SK-N-SH (cell line): ENCODE measurements at regions of chr2 and their contacts with region 1.

Region 1: GRCh38 chr2:25252281-25253105 is 84.1 kb upstream of the POMC start:
- DNase-seq: peak; percentile 99
- H3K4me3 ChIP-seq: peak overlapping the region in 1 of 2 experiments; percentile 52; a peak in 2 of 4 replicates
- H3K27ac ChIP-seq: peak overlapping the region in 1 of 2 experiments; percentile 96; a peak in 2 of 4 replicates
- H3K4me1 ChIP-seq: peaks cover 17 to 66% of the 10 kb centered on the region in 2 experiments
- H3K27me3 ChIP-seq: no peaks in the 10 kb centered on the region
- CTCF ChIP-seq: no peak
- EP300 ChIP-seq: peak in 1 of 2 experiments; percentile 37; a peak in 1 of 4 replicates
- RAD21 ChIP-seq: no peak; the same call in 1 of the 2 replicates

Region 2: DNA sequence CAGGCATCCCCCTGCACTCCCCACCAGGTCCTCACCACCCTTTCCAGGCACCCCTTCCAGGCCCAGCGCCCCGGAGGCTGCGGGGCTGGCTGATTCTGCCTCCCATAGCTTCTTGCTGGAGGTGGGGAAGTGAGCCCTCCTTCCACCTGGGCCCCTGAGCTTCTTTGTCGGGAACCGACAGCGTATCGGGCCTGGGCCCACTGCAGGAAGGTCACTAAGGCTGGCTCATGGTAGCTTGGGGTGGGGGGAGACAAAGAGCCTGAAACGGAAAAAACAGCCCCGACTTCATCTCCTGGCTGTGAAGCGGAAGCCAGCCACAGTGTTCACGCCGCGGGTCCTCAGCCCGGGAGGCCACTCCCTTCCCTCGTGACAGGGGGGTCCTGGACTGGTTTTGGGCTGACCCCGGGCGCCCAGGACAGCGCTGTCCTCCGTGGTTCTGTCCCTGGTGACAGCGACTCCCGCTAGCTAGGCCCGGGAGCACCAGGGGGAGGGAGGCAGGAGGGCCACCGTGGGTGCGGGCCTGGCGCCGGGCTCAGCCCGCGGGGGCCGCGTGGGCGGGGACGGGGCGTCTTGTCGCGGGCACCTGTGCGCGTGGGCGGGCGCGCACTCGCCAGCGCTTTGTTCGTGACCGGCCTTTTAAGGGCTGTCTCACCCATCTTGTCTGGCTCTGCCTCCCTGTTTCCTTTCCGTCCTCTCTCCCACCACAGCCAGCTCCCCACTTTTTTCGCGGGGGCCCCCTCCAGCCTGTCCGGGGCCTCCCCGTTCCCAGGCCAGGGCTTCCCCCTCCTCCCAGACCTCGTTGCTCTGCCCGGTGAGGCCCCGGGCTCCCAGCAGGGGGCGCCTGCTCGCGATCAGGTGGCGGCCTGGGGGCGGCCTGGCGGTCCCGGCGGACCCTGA is 24.3 kb after region 1 on chr2:
- CTCF ChIA-PET with region 1: interaction called, 22 read pairs
- POLR2A ChIA-PET with region 1: interaction called, 5 read pairs
- DNase-seq: peak; percentile 86
- H3K4me3 ChIP-seq: no peak overlapping the region; a peak in 1 of 4 replicates
- H3K27ac ChIP-seq: no peak overlapping the region; a peak in 1 of 4 replicates
- H3K4me1 ChIP-seq: peaks cover 0 to 23% of the 10 kb centered on the region in 2 experiments; a peak in 2 of 4 replicates
- H3K27me3 ChIP-seq: no peaks in the 10 kb centered on the region
- CTCF ChIP-seq: peak; percentile 51
- EP300 ChIP-seq: no peak
- RAD21 ChIP-seq: no peak

Region 3: DNA sequence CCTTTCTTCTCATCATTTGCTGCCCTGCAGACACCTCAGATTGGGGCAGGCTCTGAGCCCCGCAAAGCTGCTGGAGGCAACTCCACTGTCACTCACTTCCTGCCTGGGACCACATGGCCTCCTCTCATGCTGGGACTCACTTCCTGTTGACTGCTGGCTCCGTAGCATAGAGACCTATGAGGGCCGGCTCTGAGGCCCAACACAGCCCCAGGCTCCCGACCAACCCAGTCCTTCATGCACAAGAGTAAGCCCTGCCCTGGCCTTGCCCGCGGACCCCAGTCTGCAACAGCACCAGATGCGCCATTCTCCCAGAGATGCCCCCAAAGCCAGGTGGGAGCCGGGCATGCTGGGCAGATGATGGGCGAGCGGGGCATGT is 33.5 kb after region 1 on chr2:
- CTCF ChIA-PET with region 1: no interaction called
- POLR2A ChIA-PET with region 1: interaction called, 14 read pairs
- DNase-seq: peak; percentile 79
- H3K4me3 ChIP-seq: no peak overlapping the region
- H3K27ac ChIP-seq: peak overlapping the region in 1 of 2 experiments; percentile 50; a peak in 1 of 4 replicates
- H3K4me1 ChIP-seq: peaks cover 13 to 43% of the 10 kb centered on the region in 2 experiments; a peak in 2 of 4 replicates
- H3K27me3 ChIP-seq: no peaks in the 10 kb centered on the region
- CTCF ChIP-seq: no peak
- EP300 ChIP-seq: no peak
- RAD21 ChIP-seq: no peak

Region 4: DNA sequence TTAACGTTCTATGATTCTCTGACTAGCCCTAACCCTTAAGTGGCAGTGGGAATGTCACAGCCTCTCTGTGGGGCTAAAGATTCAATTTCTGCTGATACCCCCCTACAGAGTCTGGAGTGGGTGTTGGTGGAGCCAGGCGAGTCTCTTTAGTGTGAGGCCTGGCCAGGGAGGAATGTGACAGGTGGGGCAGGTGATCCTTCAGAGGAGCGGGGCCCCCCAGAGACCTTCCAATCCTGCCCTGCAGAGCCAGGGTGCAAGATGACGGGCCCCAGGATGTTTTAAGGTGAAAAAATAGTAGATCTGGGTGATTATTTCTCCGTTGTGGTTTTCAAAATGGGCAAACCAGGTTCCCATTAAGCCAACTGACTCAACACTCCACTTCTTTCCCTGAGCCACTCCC is 117.4 kb after region 1 on chr2:
- CTCF ChIA-PET with region 1: no interaction called
- POLR2A ChIA-PET with region 1: no interaction called
- DNase-seq: no peak
- H3K4me3 ChIP-seq: no peak overlapping the region
- H3K27ac ChIP-seq: no peak overlapping the region
- H3K4me1 ChIP-seq: peaks cover 0 to 51% of the 10 kb centered on the region in 2 experiments; a peak in 2 of 4 replicates
- H3K27me3 ChIP-seq: no peaks in the 10 kb centered on the region
- CTCF ChIP-seq: no peak
- EP300 ChIP-seq: no peak
- RAD21 ChIP-seq: no peak